Cardiac septum (tissue), 1 donor: ENCODE measurements at regions of chr14 and their contacts with region 1.

Region 1: GRCh38 chr14:64503478-64504309 is at the start of gene ZBTB25:
- DNase-seq: peak; percentile 91
- total RNA-seq, gene ZBTB25: 21.4 TPM

Region 2: GRCh38 chr14:64338616-64339316 is 164.9 kb before region 1 on chr14:
- intact Hi-C with region 1: no loop called
- DNase-seq: peak; percentile 95

Region 3: GRCh38 chr14:64444984-64445845 is 58.5 kb before region 1 on chr14:
- intact Hi-C with region 1: loop called (anchors 5 kb)
- DNase-seq: no peak